CD8-positive, alpha-beta T cell (primary cell): ENCODE measurements at regions of chr3 and their contacts with region 1.

Region 1: DNA sequence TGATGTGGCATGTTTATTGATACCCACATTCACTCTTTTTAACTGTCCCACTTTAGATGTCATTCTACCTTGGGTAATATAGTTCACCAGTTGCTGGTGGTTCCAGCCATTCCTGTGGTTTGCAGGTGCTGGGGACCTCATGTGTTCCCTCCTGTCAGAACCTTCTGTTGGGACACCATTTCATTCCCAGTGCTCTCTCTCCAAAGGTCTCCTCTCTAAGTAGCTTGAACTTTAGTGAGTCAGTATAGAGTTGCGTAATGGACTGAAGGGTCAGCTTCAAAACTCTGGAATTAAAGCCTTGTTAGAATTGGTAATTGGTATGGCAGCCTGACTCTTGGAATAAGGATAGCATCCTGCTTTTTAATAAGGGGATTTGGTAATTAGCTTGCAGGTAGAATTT is 108.5 kb downstream of the PLCL2 start:
- DNase-seq: no peak
- ATAC-seq: no peak
- H3K4me3 ChIP-seq: no peak overlapping the region
- H3K4me3 Mint-ChIP-seq: no peak overlapping the region
- H3K27ac ChIP-seq: no peak overlapping the region
- H3K27ac Mint-ChIP-seq: peak overlapping the region; percentile 69
- H3K4me1 ChIP-seq: peaks cover 65% of the 10 kb centered on the region
- H3K4me1 Mint-ChIP-seq: peaks cover 91% of the 10 kb centered on the region
- H3K27me3 ChIP-seq: no peaks in the 10 kb centered on the region
- H3K27me3 Mint-ChIP-seq: no peaks in the 10 kb centered on the region
- CTCF ChIP-seq: no peak

Region 2: GRCh38 chr3:16236856-16237393 is 756.3 kb before region 1 on chr3:
- CTCF ChIA-PET with region 1: no interaction called
- POLR2A ChIA-PET with region 1: no interaction called
- intact Hi-C with region 1: no loop called
- DNase-seq: no peak
- ATAC-seq: no peak
- H3K4me3 ChIP-seq: no peak overlapping the region
- H3K4me3 Mint-ChIP-seq: no peak overlapping the region
- H3K27ac ChIP-seq: no peak overlapping the region
- H3K27ac Mint-ChIP-seq: no peak overlapping the region
- H3K4me1 ChIP-seq: no peaks in the 10 kb centered on the region
- H3K4me1 Mint-ChIP-seq: no peaks in the 10 kb centered on the region
- H3K27me3 ChIP-seq: no peaks in the 10 kb centered on the region
- H3K27me3 Mint-ChIP-seq: peaks cover 3% of the 10 kb centered on the region
- CTCF ChIP-seq: no peak

Region 3: DNA sequence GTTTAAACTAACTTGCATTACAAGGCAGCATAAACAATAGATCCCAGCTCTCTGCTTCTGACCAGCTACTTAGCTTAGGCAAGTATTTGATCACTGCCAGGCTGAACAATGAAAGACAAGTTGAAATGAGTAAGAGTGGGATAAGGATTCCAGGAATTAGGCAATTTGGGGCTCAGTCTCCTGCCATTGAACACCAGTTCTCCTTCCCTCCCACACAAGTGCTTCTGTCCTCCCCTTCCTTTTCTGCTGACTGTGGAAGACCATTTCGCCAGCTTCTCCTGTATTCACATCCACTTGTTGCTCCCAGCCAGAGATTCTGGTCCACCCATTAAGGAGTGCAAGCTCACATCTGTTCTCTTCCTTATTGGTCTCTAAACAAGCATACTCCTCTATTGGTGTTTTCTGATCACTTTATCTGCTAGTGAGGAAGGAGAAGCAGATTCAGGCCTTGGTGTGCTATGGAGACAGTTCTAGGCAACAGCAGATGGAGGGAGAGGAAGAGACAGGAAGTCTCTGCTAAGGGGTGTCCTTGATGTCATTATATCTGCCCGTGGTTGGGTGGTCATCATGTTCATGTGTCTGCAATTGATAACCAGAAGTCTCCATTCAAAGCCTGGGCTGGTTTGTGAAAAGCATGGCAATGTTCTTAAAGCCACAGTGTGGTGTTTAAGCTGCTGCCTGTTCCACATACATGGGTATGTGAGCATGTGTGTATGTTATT is 13.1 kb after region 1 on chr3:
- CTCF ChIA-PET with region 1: interaction called, 3 read pairs
- POLR2A ChIA-PET with region 1: interaction called, 3 read pairs
- intact Hi-C with region 1: loop called in 1 of 2 experiments (anchors 2 kb)
- DNase-seq: peak in 1 of 9 experiments; percentile 23
- ATAC-seq: peak; percentile 55
- H3K4me3 ChIP-seq: no peak overlapping the region
- H3K4me3 Mint-ChIP-seq: no peak overlapping the region
- H3K27ac ChIP-seq: no peak overlapping the region
- H3K27ac Mint-ChIP-seq: peak overlapping the region; percentile 73
- H3K4me1 ChIP-seq: peaks cover 23% of the 10 kb centered on the region
- H3K4me1 Mint-ChIP-seq: peaks cover 70% of the 10 kb centered on the region
- H3K27me3 ChIP-seq: no peaks in the 10 kb centered on the region
- H3K27me3 Mint-ChIP-seq: no peaks in the 10 kb centered on the region
- CTCF ChIP-seq: no peak